Psoas muscle (tissue), 8 donors: ENCODE measurements at regions of chr4 and their contacts with region 1.

Region 1: GRCh38 chr4:15805583-15806517 is 27.7 kb downstream of the CD38 start:
- DNase-seq: no peak
- ATAC-seq: peak; percentile 62 to 86 (median 72)
- H3K4me3 ChIP-seq: peak overlapping the region; percentile 15
- H3K27ac ChIP-seq: peak overlapping the region; percentile 11
- H3K4me1 ChIP-seq: peaks cover 42% of the 10 kb centered on the region
- H3K27me3 ChIP-seq: no peaks in the 10 kb centered on the region
- CTCF ChIP-seq: peak; percentile 84

Region 2: GRCh38 chr4:15729910-15730533 is 75.8 kb before region 1 on chr4:
- intact Hi-C with region 1: loop called in 1 of 2 experiments (anchors 5 kb)
- DNase-seq: no peak
- ATAC-seq: peak; percentile 58 to 83 (median 70)
- H3K4me3 ChIP-seq: no peak overlapping the region
- H3K27ac ChIP-seq: no peak overlapping the region
- H3K4me1 ChIP-seq: no peaks in the 10 kb centered on the region
- H3K27me3 ChIP-seq: no peaks in the 10 kb centered on the region
- CTCF ChIP-seq: peak; percentile 85

Region 3: DNA sequence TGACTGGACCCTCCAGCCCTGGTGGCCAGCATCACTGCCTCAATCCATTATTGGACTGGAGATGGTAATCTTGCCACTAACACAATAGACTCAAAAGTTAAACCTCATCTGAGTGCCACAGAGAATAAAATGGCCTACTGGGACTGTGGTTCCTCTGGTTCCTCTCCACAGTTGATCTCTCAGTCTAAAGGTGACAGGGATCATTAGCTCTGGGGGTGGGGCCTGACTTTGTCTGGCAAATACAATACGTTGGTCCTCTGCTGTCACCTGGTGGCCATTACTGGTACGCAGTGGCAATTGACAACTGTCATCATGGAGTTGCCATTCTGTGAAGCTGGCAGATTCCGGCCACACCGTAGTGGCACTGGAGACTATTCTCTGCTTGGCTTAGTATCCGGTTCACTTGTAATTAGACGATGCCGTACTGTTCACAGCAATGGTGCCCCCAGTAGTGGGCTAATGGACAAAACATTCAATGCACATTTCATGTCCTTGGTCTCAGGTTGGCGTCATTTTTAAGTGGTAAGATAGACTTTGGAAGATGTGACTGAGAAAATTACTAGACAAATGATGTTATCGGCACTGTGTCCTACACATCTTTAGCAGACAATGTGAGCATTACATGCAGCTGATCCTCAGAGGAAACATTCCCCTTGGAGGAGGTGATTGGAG is 150.5 kb after region 1 on chr4:
- intact Hi-C with region 1: loop called (anchors 1 to 5 kb)
- DNase-seq: peak; percentile 72 to 83
- ATAC-seq: peak; percentile 92 to 99 (median 96)
- H3K4me3 ChIP-seq: no peak overlapping the region
- H3K27ac ChIP-seq: no peak overlapping the region
- H3K4me1 ChIP-seq: peaks cover 2% of the 10 kb centered on the region
- H3K27me3 ChIP-seq: no peaks in the 10 kb centered on the region
- CTCF ChIP-seq: peak; percentile 90

Region 4: DNA sequence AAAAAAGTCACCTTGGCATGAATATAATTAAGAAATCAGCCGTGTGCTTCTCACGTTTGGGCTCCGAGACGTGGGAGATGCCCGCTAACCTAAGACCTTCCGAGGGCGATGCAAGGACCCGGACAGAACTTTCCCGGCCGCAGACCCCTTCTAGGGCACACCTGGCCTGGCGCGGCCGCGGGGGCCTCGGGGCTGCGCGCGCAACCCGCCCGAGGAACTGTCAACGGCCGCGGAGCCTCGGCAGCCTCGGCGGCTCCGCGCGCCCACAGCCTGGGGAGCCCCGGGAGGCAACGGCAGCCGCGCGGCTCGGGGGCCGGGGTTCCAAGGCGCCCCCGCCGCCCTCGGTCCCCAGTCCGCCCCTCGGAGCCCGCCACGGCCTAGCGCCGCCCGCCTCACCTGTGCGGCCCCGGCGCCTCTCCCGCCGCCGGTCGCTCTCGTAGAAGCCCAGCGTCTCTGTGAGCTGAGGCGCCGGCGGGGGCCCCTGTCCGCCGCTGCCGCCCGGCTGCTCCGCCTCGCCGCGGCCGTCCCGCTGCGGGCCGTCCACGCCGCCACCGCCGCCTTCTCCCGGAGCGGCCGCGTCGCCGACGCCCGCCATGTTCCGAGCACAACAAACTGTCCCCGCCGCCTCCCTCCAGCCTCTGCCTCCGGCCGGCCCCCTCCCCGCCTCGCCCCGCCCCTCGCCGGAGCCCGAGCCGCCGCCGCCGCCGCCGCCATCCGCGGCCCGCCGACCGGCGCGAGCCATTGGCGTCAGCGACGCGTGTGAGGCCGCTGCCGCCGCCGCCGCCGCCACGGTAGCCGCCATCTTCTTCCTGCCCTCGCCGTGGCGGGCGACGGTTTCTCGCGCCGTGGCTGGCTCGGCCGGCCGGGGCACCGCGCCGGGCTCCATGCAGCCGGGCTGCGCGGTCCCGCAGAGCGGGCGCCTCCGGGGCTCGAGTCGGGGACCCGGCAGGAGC is 420.3 kb after region 1 on chr4 and contains the start of gene TAPT1:
- intact Hi-C with region 1: loop called (anchors 10 kb)
- DNase-seq: peak; percentile 85 to 92
- ATAC-seq: peak; percentile 76 to 83 (median 80)
- H3K4me3 ChIP-seq: peak within 1 kb of the TSS; percentile 86
- H3K27ac ChIP-seq: peak within 1 kb of the TSS; percentile 98
- H3K4me1 ChIP-seq: peaks cover 43% of the 10 kb centered on the region
- H3K27me3 ChIP-seq: no peaks in the 10 kb centered on the region
- CTCF ChIP-seq: no peak
- total RNA-seq, gene TAPT1: 43.6 to 70.5 (median 53.2) TPM